ENCODE measurements at regions of chr19 and their contacts with region 1.

Region 1: GRCh38 chr19:4911786-4912672 is 2.7 kb downstream of the UHRF1 start:
- DNase-seq: peak; percentile 66
- ATAC-seq: peak; percentile 16
- H3K4me3 Mint-ChIP-seq: peak overlapping the region; percentile 82
- H3K27ac Mint-ChIP-seq: peak overlapping the region; percentile 76
- H3K4me1 Mint-ChIP-seq: peaks cover 51% of the 10 kb centered on the region
- H3K27me3 Mint-ChIP-seq: no peaks in the 10 kb centered on the region

Region 2: GRCh38 chr19:4968462-4969291 is 56.6 kb after region 1 on chr19 and contains the start of gene KDM4B:
- POLR2A ChIA-PET with region 1: interaction called, 15 read pairs
- DNase-seq: peak; percentile 100
- ATAC-seq: peak; percentile 97
- H3K4me3 Mint-ChIP-seq: peak within 1 kb of the TSS; percentile 94
- H3K27ac Mint-ChIP-seq: peak within 1 kb of the TSS; percentile 94
- H3K4me1 Mint-ChIP-seq: peaks cover 30% of the 10 kb centered on the region
- H3K27me3 Mint-ChIP-seq: no peaks in the 10 kb centered on the region
- total RNA-seq, gene KDM4B: 55.9 to 60.8 TPM

Measured in activated naive CD8-positive, alpha-beta T cell treated with anti-CD3 and anti-CD28 coated beads, Interleukin-2, amount 10 ng/mL, durations not matched to agents 7 days and 5 days (primary cell).